ENCODE measurements at regions of chr5 and their contacts with region 1.

Region 1: GRCh38 chr5:932628-933250 is 40.1 kb downstream of the TRIP13 start:
- DNase-seq: no peak
- H3K4me3 ChIP-seq: no peak overlapping the region
- H3K27me3 ChIP-seq: peaks cover 17% of the 10 kb centered on the region
- CTCF ChIP-seq: no peak

Region 2: DNA sequence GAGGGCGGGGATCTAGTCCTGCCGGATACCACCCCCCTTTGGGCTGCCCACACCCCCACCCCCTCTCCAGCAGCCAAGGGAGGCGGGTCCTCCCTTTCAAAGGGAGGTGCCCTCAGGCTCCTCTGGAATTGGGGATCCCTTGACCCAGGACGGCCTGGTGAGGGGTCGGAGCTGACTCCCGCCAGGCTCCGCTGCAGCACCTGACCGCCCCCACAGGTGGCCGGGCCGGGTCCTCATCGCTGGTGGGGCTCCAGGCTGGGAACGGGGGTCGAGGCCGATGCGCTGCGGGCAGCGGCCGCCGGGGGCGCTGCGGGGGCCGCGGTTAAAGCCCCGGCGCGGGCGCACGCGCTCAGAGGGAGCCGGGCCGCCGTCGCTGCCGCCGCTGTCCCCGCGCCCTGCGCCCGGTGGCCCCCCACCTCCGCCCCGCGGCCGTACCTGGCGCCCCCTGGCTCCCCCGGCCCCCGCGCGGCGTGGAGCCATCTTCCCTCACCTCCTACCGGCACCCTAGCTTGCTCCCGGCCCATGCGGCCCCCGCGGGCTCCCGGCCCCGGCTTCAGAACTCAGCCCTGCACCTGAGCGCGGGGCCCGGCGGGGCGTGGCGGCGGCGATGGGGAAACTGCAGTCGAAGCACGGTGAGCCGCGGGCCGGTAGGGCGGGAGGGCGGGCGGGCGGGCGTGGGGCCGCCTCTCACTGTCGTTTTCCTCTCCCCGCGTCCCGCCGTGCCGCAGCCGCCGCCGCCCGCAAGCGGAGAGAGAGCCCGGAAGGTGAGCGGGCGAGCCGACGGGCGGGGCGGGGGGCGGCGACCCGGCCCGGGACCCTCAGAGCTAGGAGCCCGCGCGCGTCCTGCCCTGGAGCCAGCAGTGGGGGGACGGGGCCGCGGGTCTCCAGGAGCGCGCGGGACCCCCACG is 76.0 kb after region 1 on chr5 and contains the start of gene NKD2:
- CTCF ChIA-PET with region 1: interaction called, 11 read pairs
- POLR2A ChIA-PET with region 1: no interaction called
- DNase-seq: no peak
- H3K4me3 ChIP-seq: no peak within 1 kb of the TSS
- H3K27me3 ChIP-seq: peaks cover 50% of the 10 kb centered on the region
- CTCF ChIP-seq: peak; percentile 16; the same call in 1 of the 2 replicates
- polyA plus RNA-seq, gene NKD2: not detected in 2 replicates

Region 3: DNA sequence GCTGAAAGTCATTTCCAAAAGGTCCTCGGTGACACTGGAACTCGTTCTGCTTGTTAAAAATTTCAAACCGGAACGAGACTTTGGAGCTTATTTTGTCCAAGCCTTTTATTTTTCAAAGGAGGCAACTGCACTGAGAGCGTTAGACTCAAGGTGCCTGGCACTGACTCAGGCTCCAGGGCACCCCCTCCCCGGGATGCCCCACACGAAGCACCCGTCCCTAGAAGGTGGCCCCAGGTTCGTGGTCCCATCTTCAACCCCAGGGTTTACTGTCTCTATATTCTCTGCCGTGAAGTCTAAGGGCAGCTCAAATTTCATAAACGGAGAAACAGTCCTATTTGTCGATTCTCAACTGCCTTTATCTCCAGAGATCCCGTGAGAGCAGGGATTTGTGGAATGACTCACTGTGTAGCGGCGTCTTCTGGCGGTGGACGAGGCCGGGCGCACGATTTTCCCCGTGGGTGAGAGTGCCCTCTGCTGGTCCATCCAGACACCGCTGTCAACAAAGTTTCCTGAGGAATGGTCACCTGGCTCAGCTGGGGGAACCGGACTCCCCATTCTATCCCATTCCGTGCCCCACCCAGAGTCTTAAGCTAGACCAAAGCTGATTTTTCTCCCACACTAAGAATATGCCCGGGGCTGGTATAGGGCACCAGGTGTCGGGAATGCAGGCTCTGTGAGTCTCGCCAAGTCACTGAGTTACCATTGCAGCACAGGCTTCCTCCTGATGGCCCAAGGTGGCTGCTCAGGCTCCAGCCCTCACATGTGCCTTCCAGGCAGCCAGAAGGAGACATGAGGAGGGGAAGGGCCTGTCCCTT is 241.6 kb after region 1 on chr5:
- CTCF ChIA-PET with region 1: interaction called, 151 read pairs
- POLR2A ChIA-PET with region 1: interaction called, 4 read pairs
- DNase-seq: peak; percentile 25
- H3K4me3 ChIP-seq: no peak overlapping the region
- H3K27me3 ChIP-seq: no peaks in the 10 kb centered on the region
- CTCF ChIP-seq: peak; percentile 85